BJ (cell line): ENCODE measurements at regions of chr10 and their contacts with region 1.

Region 1: GRCh38 chr10:78657163-78657861 is 411.5 kb upstream of the ZMIZ1 start:
- DNase-seq: no peak
- H3K4me3 ChIP-seq: no peak overlapping the region
- H3K27me3 ChIP-seq: 0 out of 2 replicates have a peak, but pooled peaks cover 3% of the 10 kb centered on the region
- CTCF ChIP-seq: peak; percentile 87

Region 2: GRCh38 chr10:78672918-78673317 is 15.6 kb after region 1 on chr10:
- CTCF ChIA-PET with region 1: interaction called, 19 read pairs
- POLR2A ChIA-PET with region 1: no interaction called
- DNase-seq: no peak
- H3K4me3 ChIP-seq: no peak overlapping the region
- H3K27me3 ChIP-seq: 0 out of 2 replicates have a peak, but pooled peaks cover 2% of the 10 kb centered on the region
- CTCF ChIP-seq: no peak